Mammary epithelial cell (primary cell): ENCODE measurements at regions of chr12 and their contacts with region 1.

Region 1: GRCh38 chr12:67648521-67649260 is at the start of gene DYRK2:
- DNase-seq: peak; percentile 72
- H3K4me3 ChIP-seq: peak within 1 kb of the TSS; percentile 85 to 92 (median 88)
- H3K27ac ChIP-seq: peak within 1 kb of the TSS; percentile 86
- H3K4me1 ChIP-seq: peaks cover 25% of the 10 kb centered on the region
- H3K27me3 ChIP-seq: no peaks in the 10 kb centered on the region
- CTCF ChIP-seq: peak in 1 of 2 donors; percentile 6
- total RNA-seq, gene DYRK2: 17.8 to 25.8 TPM

Region 2: GRCh38 chr12:67173258-67173657 is 475.4 kb before region 1 on chr12:
- CTCF ChIA-PET with region 1: no interaction called
- dilution Hi-C with region 1: no loop called
- in situ Hi-C with region 1: no loop called
- intact Hi-C with region 1: no loop called
- DNase-seq: no peak
- H3K4me3 ChIP-seq: no peak overlapping the region
- H3K27ac ChIP-seq: no peak overlapping the region
- H3K4me1 ChIP-seq: no peaks in the 10 kb centered on the region
- H3K27me3 ChIP-seq: peaks cover 5% of the 10 kb centered on the region
- CTCF ChIP-seq: no peak

Region 3: GRCh38 chr12:67355578-67356379 is 292.9 kb before region 1 on chr12:
- CTCF ChIA-PET with region 1: no interaction called
- dilution Hi-C with region 1: no loop called
- in situ Hi-C with region 1: no loop called
- intact Hi-C with region 1: loop called (anchors 2 kb)
- DNase-seq: peak; percentile 39
- H3K4me3 ChIP-seq: no peak overlapping the region
- H3K27ac ChIP-seq: no peak overlapping the region
- H3K4me1 ChIP-seq: no peaks in the 10 kb centered on the region
- H3K27me3 ChIP-seq: no peaks in the 10 kb centered on the region
- CTCF ChIP-seq: peak; percentile 26 to 67

Region 4: GRCh38 chr12:67457778-67458177 is 190.9 kb before region 1 on chr12:
- CTCF ChIA-PET with region 1: no interaction called
- dilution Hi-C with region 1: no loop called
- in situ Hi-C with region 1: loop called in 1 of 2 experiments (anchors 25 kb)
- intact Hi-C with region 1: loop called (anchors 5 kb)
- DNase-seq: no peak
- H3K4me3 ChIP-seq: no peak overlapping the region
- H3K27ac ChIP-seq: no peak overlapping the region
- H3K4me1 ChIP-seq: peaks cover 19% of the 10 kb centered on the region
- H3K27me3 ChIP-seq: no peaks in the 10 kb centered on the region
- CTCF ChIP-seq: peak; percentile 36 to 37

Region 5: DNA sequence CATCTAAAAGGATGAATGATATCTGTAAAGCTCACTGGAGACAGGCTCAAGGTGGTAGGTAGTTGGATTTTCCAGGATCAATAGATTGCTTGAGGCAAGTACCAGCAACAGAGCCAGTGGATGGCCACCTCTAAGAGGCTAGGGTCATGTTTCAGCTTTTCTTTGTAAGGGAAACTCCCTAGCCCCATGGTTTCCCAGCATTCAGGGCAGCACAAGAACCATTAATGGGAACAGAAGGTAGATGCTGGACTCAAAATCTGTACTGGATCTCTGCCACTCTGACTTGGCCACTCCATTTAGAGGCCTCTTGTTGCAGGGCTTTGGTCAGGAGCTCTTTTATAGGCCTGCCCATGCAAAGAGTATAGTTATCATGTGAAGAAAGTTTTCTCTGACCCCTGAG is 76.2 kb before region 1 on chr12:
- CTCF ChIA-PET with region 1: no interaction called
- dilution Hi-C with region 1: no loop called
- in situ Hi-C with region 1: no loop called
- intact Hi-C with region 1: no loop called
- DNase-seq: no peak
- H3K4me3 ChIP-seq: no peak overlapping the region
- H3K27ac ChIP-seq: no peak overlapping the region
- H3K4me1 ChIP-seq: no peaks in the 10 kb centered on the region
- H3K27me3 ChIP-seq: no peaks in the 10 kb centered on the region
- CTCF ChIP-seq: no peak

Region 6: GRCh38 chr12:67592216-67593011 is 56.3 kb before region 1 on chr12:
- CTCF ChIA-PET with region 1: no interaction called
- dilution Hi-C with region 1: no loop called
- in situ Hi-C with region 1: no loop called
- intact Hi-C with region 1: loop called (anchors 1 kb)
- DNase-seq: peak; percentile 62
- H3K4me3 ChIP-seq: no peak overlapping the region
- H3K27ac ChIP-seq: peak overlapping the region; percentile 41
- H3K4me1 ChIP-seq: peaks cover 30% of the 10 kb centered on the region
- H3K27me3 ChIP-seq: no peaks in the 10 kb centered on the region
- CTCF ChIP-seq: no peak

Region 7: DNA sequence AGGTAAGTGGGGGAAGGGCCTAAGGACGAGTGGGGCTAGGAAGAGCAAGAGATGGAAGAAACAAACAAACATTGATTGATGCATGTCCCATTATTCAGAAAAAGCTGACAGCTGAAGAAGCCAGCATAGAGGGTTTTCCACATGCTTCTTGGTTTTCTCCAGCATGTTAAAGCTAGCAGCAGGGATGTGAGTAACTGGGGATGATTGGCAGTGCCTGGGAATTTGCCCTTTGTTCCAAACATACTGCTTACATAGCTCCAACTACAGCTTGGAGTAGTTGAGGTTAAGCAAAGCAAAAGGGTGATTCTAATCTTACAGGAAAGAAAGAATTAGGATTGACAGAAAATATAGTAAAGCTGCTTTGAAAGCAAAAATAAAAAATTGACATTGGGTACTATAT is 272.6 kb after region 1 on chr12:
- CTCF ChIA-PET with region 1: interaction called, 5 read pairs
- dilution Hi-C with region 1: no loop called
- in situ Hi-C with region 1: no loop called
- intact Hi-C with region 1: loop called (anchors 5 kb)
- DNase-seq: peak; percentile 63
- H3K4me3 ChIP-seq: no peak overlapping the region
- H3K27ac ChIP-seq: peak overlapping the region; percentile 28
- H3K4me1 ChIP-seq: peaks cover 37% of the 10 kb centered on the region
- H3K27me3 ChIP-seq: no peaks in the 10 kb centered on the region
- CTCF ChIP-seq: no peak